AG04449 (cell line): ENCODE measurements at regions of chr10 and their contacts with region 1.

Region 1: DNA sequence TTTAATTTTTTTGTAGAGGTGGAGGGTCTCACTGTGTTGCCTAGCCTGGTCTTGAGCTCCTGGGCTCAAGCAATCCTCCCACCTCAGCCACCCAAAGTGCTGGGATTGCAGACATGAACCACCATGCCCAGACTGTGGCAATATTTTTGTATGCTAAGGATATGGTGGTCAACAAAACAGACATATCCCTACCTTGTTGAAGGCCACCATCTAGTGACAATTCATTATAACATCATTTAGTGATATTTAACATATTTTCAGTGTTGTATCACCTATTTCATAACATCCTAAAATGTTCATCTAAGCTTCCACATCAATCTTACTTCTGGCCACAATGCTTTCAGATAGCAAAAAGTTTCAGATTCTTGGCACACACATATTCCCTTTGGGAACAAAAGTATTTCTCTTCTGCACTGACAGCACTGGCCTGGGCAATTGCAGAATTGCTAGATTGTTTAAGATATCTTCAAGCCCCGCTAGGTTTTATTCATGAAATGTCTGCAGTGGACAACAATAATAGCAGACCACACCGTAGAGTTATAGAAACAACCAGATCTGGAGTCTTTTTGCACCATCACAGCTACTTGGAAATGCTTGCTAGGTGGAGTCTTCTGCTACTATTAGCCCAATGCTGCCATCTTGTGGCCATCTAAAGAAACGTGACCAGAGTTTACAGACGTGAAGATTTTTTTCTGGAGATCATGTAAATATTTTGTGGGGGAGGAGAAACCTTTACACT is 58.4 kb downstream of the DNAJC12 start:
- DNase-seq: peak; percentile 59
- H3K4me3 ChIP-seq: no peak overlapping the region
- CTCF ChIP-seq: peak; percentile 54

Region 2: DNA sequence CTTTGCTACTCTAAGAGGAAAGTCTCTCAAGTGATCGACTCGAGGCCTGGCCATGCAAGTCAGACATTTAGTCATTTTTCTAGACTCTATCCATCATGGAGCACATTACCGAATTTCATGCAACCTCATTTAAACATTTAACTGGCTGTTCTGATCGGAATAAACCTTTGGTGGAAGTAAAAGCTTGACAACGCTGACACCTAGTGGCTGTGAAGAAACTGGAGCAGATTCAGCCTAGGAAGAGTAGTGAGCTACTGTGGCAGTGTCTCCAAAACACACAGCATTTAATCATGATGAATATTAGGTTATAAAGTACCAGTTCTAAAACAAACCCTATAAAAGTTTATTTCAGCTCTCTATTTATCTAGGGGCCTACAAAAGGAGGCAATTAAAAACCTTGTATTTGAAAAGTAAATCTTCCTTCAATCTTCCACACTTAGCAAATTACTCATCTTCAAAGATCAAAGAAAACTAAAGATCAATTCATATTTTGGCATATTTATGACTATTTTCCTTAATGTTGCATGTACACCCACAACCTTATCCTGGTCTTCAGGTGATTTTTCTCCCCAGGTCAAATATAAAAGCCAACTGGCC is 258.6 kb before region 1 on chr10:
- CTCF ChIA-PET with region 1: interaction called, 21 read pairs
- POLR2A ChIA-PET with region 1: no interaction called
- DNase-seq: peak; percentile 5
- H3K4me3 ChIP-seq: no peak overlapping the region
- CTCF ChIP-seq: peak; percentile 74

Region 3: GRCh38 chr10:67666416-67667034 is 113.1 kb before region 1 on chr10:
- CTCF ChIA-PET with region 1: interaction called, 74 read pairs
- POLR2A ChIA-PET with region 1: no interaction called
- DNase-seq: no peak
- H3K4me3 ChIP-seq: no peak overlapping the region
- CTCF ChIP-seq: peak; percentile 31

Region 4: DNA sequence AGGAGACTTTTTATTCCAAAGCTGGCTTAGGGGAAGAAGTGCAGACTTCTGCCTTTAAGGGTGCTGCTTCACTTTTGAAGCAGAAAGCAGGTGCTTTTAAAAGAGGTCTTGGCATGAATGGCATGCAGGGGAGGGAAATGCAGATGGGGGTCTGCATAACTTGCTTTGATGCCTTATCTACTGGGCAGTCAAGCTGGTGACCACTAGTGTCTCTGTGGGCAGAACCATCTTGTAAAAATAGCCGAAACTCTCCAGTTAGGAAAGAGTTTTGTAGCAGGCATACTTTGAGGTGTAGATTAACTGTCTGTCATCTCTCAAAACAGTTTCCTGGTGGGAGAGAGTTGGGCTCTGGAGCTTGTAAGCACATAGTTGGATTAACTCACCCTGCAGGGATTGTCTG is 73.7 kb before region 1 on chr10:
- CTCF ChIA-PET with region 1: interaction called, 13 read pairs
- POLR2A ChIA-PET with region 1: no interaction called
- DNase-seq: no peak
- H3K4me3 ChIP-seq: no peak overlapping the region
- CTCF ChIP-seq: no peak

Region 5: GRCh38 chr10:68032113-68032512 is 252.5 kb after region 1 on chr10:
- CTCF ChIA-PET with region 1: no interaction called
- POLR2A ChIA-PET with region 1: no interaction called
- DNase-seq: no peak
- H3K4me3 ChIP-seq: no peak overlapping the region
- CTCF ChIP-seq: no peak